HCT116 (cell line): ENCODE measurements at regions of chr15 and their contacts with region 1.

Region 1: GRCh38 chr15:44711356-44712107 is at the start of gene B2M:
- DNase-seq: peak; percentile 90
- ATAC-seq: peak; percentile 91
- H3K4me3 ChIP-seq: peak within 1 kb of the TSS; percentile 84 to 93
- H3K27ac ChIP-seq: peak within 1 kb of the TSS; percentile 69
- H3K4me1 ChIP-seq: peaks cover 11 to 28% of the 10 kb centered on the region in 2 experiments; a peak in 3 of 4 replicates
- H3K27me3 ChIP-seq: no peaks in the 10 kb centered on the region
- CTCF ChIP-seq: no peak
- POLR2A ChIP-seq: peak; percentile 98
- RAD21 ChIP-seq: no peak
- total RNA-seq, gene B2M: 388 TPM

Region 2: DNA sequence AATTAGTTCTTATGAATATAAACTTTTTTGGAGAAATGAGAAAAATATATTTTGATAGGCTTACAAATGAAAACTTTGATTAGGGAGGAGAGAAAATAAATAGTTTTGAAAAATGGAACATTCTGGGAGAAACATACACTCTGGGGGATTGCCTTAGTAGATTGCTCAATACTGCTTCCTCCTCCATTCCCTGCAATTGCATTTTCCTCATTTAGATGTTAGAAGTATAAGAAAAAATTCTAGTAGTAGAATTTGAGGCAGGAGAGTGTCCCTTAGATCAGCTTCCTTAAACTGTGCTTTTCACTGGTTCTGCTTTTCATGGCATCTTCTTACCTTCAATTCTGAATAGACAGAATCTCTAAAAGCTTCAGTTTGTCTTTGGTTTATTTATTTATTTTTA is 330.3 kb before region 1 on chr15:
- CTCF ChIA-PET with region 1: no interaction called
- POLR2A ChIA-PET with region 1: no interaction called
- RAD21 ChIA-PET with region 1: no interaction called
- intact Hi-C with region 1: no loop called
- DNase-seq: no peak
- ATAC-seq: no peak
- H3K4me3 ChIP-seq: no peak overlapping the region
- H3K27ac ChIP-seq: no peak overlapping the region
- H3K4me1 ChIP-seq: peaks cover 0 to 5% of the 10 kb centered on the region in 2 experiments; a peak in 2 of 4 replicates
- H3K27me3 ChIP-seq: no peaks in the 10 kb centered on the region
- CTCF ChIP-seq: no peak
- POLR2A ChIP-seq: no peak
- RAD21 ChIP-seq: no peak

Region 3: GRCh38 chr15:44682211-44682610 is 29.3 kb before region 1 on chr15:
- CTCF ChIA-PET with region 1: no interaction called
- POLR2A ChIA-PET with region 1: interaction called, 11 read pairs
- RAD21 ChIA-PET with region 1: no interaction called
- intact Hi-C with region 1: no loop called
- DNase-seq: no peak
- ATAC-seq: no peak
- H3K4me3 ChIP-seq: no peak overlapping the region
- H3K27ac ChIP-seq: no peak overlapping the region
- H3K4me1 ChIP-seq: peaks cover 6 to 20% of the 10 kb centered on the region in 2 experiments; a peak in 3 of 4 replicates
- H3K27me3 ChIP-seq: no peaks in the 10 kb centered on the region
- CTCF ChIP-seq: no peak
- POLR2A ChIP-seq: no peak
- RAD21 ChIP-seq: no peak

Region 4: GRCh38 chr15:44728576-44729407 is 17.3 kb after region 1 on chr15:
- CTCF ChIA-PET with region 1: interaction called, 30 read pairs
- POLR2A ChIA-PET with region 1: interaction called, 106 read pairs
- RAD21 ChIA-PET with region 1: interaction called in 1 of 2 experiments, 4 read pairs
- intact Hi-C with region 1: no loop called
- DNase-seq: peak; percentile 94
- ATAC-seq: peak; percentile 92
- H3K4me3 ChIP-seq: peak overlapping the region; percentile 58 to 67
- H3K27ac ChIP-seq: peak overlapping the region; percentile 93
- H3K4me1 ChIP-seq: peaks cover 30 to 34% of the 10 kb centered on the region in 2 experiments
- H3K27me3 ChIP-seq: no peaks in the 10 kb centered on the region
- CTCF ChIP-seq: no peak
- POLR2A ChIP-seq: peak; percentile 73
- RAD21 ChIP-seq: no peak